IMR-90 (cell line): ENCODE measurements at regions of chr22 and their contacts with region 1.

Region 1: DNA sequence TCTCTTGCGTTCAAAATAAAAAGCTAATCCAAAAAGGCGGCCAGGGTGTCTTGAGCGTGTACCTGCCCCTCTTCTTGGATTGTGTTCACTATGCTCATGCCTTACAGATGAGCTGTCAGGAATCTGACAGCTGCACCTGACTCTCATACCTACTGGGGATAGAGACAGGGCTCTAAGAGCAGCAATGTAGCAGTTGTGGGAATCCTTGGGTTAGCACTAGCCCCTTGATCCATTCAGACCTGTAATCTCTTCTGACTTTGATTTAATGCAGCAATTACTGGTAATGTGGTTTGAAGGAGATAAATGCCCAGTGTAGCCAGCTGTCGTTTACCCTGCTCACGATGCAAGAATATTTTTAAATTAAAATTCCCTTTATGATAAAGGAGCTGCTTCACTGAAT is 145.8 kb downstream of the APOL5 start:
- DNase-seq: no peak
- ATAC-seq: no peak
- H3K4me3 ChIP-seq: no peak overlapping the region
- H3K27ac ChIP-seq: no peak overlapping the region
- H3K4me1 ChIP-seq: peaks cover 4% of the 10 kb centered on the region
- H3K27me3 ChIP-seq: no peaks in the 10 kb centered on the region
- CTCF ChIP-seq: no peak
- POLR2A ChIP-seq: no peak
- RAD21 ChIP-seq: no peak

Region 2: DNA sequence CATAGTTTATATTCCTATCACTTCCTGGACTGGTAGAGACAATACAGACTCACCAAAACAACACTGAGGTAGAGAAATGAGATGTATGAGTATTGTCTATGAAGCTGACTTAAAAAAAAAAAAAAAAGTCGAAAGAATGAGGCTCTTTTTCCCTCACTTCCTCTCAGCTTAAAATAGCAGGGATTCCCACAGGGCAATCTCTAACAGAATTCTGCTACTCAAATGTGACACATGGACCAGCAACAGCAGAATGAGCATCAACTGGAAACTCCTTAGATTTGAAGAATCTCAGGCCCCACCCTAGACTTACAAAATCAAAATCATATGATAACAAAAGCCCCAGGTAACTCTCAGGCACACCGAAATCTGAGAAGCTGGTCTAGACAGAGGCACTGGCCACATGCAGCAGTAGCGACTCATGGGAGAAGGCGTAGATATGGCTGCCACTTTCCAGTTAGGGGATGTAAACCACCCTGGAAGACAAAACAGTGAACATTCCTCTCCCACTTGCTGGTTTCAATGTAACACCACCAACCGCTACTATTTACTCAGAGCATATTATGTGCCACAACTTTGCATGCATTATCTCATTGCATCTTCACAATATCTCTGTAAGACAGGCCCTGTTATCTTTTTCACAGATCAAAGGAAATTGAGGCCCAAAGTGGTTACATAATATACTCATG is 37.2 kb after region 1 on chr22:
- CTCF ChIA-PET with region 1: interaction called, 5 read pairs
- POLR2A ChIA-PET with region 1: no interaction called
- dilution Hi-C with region 1: no loop called
- in situ Hi-C with region 1: no loop called
- intact Hi-C with region 1: loop called (anchors 5 kb)
- DNase-seq: peak; percentile 81
- ATAC-seq: peak; percentile 89
- H3K4me3 ChIP-seq: no peak overlapping the region
- H3K27ac ChIP-seq: no peak overlapping the region
- H3K4me1 ChIP-seq: peaks cover 5% of the 10 kb centered on the region
- H3K27me3 ChIP-seq: no peaks in the 10 kb centered on the region
- CTCF ChIP-seq: no peak
- POLR2A ChIP-seq: no peak
- RAD21 ChIP-seq: 0 out of 2 replicates have a peak, but pooled peaks have one; percentile 7